ENCODE measurements at regions of chr1 and their contacts with region 1.

Region 1: DNA sequence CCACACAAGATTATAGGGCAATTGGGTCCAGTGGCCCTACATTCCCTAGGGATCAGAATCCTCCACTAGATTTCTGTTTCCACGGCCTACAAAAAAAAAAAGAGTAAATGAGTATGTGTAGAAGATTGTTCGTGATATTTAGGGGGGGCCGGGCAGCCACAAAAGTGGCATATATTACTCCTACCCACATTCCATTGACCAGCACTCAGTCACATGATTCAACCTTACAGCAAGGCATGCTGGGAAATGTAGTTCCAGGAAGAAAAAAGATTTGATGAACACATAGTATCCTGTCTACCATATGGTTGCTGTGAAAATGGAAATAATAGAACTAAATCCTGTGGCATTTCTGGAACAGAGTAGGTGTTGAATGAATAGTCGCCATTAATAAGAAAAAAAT is 43.4 kb upstream of the GJB5 start:
- DNase-seq: no peak
- H3K4me3 ChIP-seq: no peak overlapping the region
- H3K27ac ChIP-seq: no peak overlapping the region
- H3K4me1 ChIP-seq: no peaks in the 10 kb centered on the region
- H3K27me3 ChIP-seq: no peaks in the 10 kb centered on the region
- CTCF ChIP-seq: no peak
- EP300 ChIP-seq: no peak
- POLR2A ChIP-seq: no peak

Region 2: DNA sequence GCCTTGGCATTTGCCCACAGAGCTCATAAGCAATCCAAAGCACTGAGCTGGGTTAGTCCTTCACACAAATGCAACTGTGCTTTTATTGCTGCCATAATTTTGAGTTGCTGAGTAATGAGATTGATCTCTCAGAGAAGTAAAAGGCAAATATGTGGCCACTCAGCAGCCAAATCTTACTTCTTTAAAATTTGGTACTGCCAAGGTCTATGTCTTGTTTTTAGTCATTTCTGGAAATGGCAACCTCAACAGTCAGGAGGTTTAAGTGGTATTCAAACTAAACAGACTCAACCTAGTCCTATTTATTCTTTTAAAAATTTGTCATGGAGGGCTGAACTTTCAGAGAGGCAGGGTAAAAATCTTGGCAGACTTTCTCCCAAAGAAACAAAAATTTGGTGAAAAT is 173.0 kb before region 1 on chr1:
- in situ Hi-C with region 1: no loop called
- intact Hi-C with region 1: no loop called
- DNase-seq: no peak
- H3K4me3 ChIP-seq: no peak overlapping the region
- H3K27ac ChIP-seq: no peak overlapping the region
- H3K4me1 ChIP-seq: no peaks in the 10 kb centered on the region
- H3K27me3 ChIP-seq: no peaks in the 10 kb centered on the region
- CTCF ChIP-seq: no peak
- EP300 ChIP-seq: no peak
- POLR2A ChIP-seq: no peak

Region 3: DNA sequence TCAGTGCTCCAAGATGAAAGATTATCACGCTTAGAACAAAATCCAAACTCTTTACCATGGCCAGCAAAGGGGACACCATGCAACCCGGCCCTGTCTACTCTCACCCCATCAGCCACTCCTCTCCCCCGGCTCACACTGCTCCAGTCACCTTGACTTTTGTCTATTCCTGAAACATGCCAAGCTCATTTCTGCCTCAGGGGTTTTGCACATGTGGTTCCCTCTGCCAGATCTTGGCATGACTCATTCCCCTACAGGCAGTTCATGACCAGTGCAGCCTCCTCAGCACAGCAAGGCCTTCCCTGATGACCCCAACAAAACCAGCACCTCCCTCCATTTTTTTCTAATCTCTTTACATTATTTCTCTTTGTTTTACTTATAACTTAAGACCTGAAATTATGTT is 15.3 kb before region 1 on chr1:
- in situ Hi-C with region 1: no loop called
- intact Hi-C with region 1: loop called (anchors 1 kb)
- DNase-seq: no peak
- H3K4me3 ChIP-seq: no peak overlapping the region
- H3K27ac ChIP-seq: no peak overlapping the region
- H3K4me1 ChIP-seq: no peaks in the 10 kb centered on the region
- H3K27me3 ChIP-seq: no peaks in the 10 kb centered on the region
- CTCF ChIP-seq: no peak
- EP300 ChIP-seq: no peak
- POLR2A ChIP-seq: no peak

Region 4: GRCh38 chr1:34779526-34779925 is 68.0 kb after region 1 on chr1:
- in situ Hi-C with region 1: no loop called
- intact Hi-C with region 1: loop called (anchors 2 kb)
- DNase-seq: no peak
- H3K4me3 ChIP-seq: no peak overlapping the region
- H3K27ac ChIP-seq: no peak overlapping the region
- H3K4me1 ChIP-seq: peaks cover 0 to 37% (median 22%) of the 10 kb centered on the region in 4 donors
- H3K27me3 ChIP-seq: peaks cover 37% of the 10 kb centered on the region
- CTCF ChIP-seq: no peak
- EP300 ChIP-seq: no peak
- POLR2A ChIP-seq: no peak

Region 5: DNA sequence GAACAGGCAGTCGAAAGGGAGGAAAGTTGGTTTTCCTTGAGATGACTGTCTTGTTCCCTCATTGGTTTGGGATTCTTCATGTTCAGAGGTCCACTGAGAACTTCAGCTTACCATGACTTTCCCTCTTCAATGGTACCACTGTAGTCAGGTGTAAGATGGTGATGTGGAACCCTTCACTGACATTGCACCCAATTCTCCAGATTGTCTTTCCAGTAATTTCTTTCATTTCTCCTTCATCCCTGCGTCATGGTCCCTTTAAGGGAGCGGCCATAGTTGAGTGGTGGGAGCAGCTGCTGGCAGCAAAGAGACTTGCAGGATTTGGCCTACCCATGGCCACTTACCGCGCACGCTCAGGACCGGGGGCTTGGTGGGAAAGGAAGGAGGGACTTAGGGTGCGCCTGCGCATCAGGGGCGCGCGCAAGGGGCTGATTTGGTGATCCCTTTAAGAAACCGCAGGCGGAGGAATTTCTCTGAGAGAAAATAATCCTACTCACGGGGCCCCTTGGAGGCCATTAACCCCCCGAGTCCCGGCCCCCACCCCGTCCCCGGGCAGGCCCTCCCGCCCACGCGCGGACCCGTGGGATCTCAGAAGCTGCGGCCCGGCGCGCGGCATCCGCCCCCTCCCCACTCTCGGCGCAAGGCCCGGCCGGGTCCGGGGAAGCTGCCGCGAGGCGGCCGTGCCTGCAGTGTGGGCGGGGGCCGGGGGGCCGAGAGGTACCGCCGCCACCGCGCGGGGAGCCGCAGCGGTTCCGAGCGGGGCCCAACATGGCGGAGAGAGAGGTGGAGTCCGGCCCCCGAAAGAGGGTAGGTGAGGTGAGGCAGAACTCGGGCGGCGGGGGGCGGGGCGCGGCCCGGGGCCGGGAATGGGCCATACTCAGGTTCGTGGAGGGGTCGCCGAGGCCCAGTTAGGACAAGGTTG is 557.1 kb after region 1 on chr1 and contains the start of gene ZMYM4:
- in situ Hi-C with region 1: no loop called
- intact Hi-C with region 1: no loop called
- DNase-seq: peak; percentile 93
- H3K4me3 ChIP-seq: peak within 1 kb of the TSS; percentile 77 to 95 (median 90)
- H3K27ac ChIP-seq: peak within 1 kb of the TSS; percentile 92 to 94 (median 93)
- H3K4me1 ChIP-seq: peaks cover 6 to 30% (median 18%) of the 10 kb centered on the region in 4 donors
- H3K27me3 ChIP-seq: no peaks in the 10 kb centered on the region
- CTCF ChIP-seq: peak in 2 of 5 experiments; percentile 16 to 47
- EP300 ChIP-seq: no peak
- POLR2A ChIP-seq: peak; percentile 38
- total RNA-seq, gene ZMYM4: 7.9 to 27.9 (median 25.5) TPM

Measured in transverse colon (tissue), 4 donors.